Dorsolateral prefrontal cortex (tissue), 120 donors: ENCODE measurements at regions of chr4 and their contacts with region 1.

Region 1: DNA sequence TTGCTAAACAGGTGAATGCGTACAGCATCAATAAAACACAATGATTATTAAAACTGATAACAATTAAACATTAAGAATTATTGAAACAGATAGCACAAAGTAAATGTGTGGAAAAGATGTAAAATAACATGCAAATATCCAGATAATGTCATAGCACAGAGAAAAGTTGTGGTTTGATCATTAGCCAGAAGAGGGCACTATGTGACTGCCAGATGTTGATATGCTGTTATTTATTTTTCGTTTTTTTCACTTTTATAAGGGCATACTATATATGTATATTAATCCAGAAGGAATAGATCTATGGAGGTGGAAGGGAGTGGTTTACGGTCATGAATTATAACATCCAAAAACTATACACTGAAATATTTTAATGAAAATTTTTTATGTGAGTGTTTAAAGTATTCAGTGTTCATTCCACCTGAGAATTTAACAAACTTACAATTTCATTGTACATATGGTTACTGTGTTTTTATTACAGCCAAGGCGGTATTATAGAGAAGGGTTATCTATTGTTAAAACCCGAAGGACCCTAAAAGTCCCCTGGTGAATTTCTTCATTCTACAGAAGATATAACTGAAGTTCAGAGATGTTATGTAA is 211.9 kb upstream of the UGT8 start:
- DNase-seq: no peak
- H3K4me3 ChIP-seq: no peak overlapping the region
- H3K27ac ChIP-seq: no peak overlapping the region
- H3K27me3 ChIP-seq: peaks cover 0 to 4% (median 0%) of the 10 kb centered on the region in 45 donors
- CTCF ChIP-seq: peak; percentile 49 to 97 (median 80)

Region 2: GRCh38 chr4:113547487-113548042 is 839.2 kb before region 1 on chr4:
- intact Hi-C with region 1: loop called in 1 of 2 experiments (anchors 5 kb)
- DNase-seq: peak; percentile 64 to 88 (median 78)
- H3K4me3 ChIP-seq: peak overlapping the region in 3 of 59 donors; percentile 5 to 8 (median 7)
- H3K27ac ChIP-seq: peak overlapping the region in 17 of 59 donors; percentile 9 to 74 (median 28)
- H3K27me3 ChIP-seq: no peaks in the 10 kb centered on the region
- CTCF ChIP-seq: peak; percentile 86 to 99 (median 97)

Region 3: DNA sequence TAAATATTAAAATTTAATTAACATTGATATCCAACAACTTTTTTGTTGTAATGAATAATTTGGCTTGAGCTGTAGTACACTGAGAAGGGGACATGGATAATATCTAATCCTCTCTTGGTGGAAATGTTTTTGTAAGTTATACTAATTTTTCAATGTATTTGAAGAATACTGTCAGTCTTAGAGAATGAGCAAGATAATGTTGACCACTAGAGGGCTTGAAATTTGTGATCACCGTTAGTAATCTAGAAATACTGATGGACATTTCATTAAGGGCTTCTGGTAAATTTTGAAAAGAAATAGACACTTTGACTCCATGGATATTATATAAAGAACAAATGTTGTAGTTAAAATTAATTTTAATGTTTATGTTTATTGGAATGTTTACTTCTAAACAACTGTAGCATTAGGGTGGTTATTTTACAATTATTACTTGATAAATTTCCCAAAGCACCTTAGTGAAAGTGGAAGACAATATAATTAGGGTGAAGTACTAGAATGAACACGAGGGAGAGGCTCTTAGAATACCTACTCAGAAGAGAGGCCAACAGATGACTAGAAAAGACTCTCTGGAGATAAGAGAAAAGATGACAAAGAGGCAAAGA is 605.2 kb before region 1 on chr4:
- intact Hi-C with region 1: loop called in 1 of 2 experiments (anchors 5 kb)
- DNase-seq: no peak
- H3K4me3 ChIP-seq: no peak overlapping the region
- H3K27ac ChIP-seq: no peak overlapping the region
- H3K27me3 ChIP-seq: no peaks in the 10 kb centered on the region
- CTCF ChIP-seq: peak; percentile 59 to 86 (median 73)

Region 4: GRCh38 chr4:114547340-114548134 is 160.8 kb after region 1 on chr4:
- intact Hi-C with region 1: no loop called
- DNase-seq: no peak
- H3K4me3 ChIP-seq: no peak overlapping the region
- H3K27ac ChIP-seq: no peak overlapping the region
- H3K27me3 ChIP-seq: no peaks in the 10 kb centered on the region
- CTCF ChIP-seq: no peak

Region 5: DNA sequence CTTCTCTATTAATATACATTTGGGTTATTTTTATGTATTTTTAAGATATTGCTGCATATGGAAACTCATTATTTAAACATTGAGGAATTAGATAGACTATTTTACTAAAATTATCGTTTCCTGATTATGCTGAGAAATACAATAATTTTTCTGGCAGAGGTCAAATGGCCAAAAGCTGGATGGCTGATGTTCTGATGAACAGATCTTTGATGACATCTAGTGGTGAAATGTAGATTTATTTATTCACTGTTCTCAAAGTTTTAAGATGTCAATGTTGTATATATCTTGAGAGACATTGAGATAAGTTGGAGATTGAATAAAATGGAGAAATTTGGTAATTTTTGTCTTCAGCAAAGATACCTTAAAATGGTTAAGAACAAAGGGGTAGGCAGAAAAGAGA is 308.0 kb after region 1 on chr4:
- intact Hi-C with region 1: loop called (anchors 5 to 10 kb)
- DNase-seq: no peak
- H3K4me3 ChIP-seq: no peak overlapping the region
- H3K27ac ChIP-seq: peak overlapping the region in 24 of 59 donors; percentile 1 to 81 (median 46)
- H3K27me3 ChIP-seq: peaks cover 0 to 4% (median 0%) of the 10 kb centered on the region in 45 donors
- CTCF ChIP-seq: peak; percentile 62 to 92 (median 79)

Region 6: GRCh38 chr4:115851918-115852766 is 1465.4 kb after region 1 on chr4:
- intact Hi-C with region 1: loop called in 1 of 2 experiments (anchors 10 kb)
- DNase-seq: peak in 3 of 10 donors; percentile 24 to 38 (median 32)
- H3K4me3 ChIP-seq: no peak overlapping the region
- H3K27ac ChIP-seq: no peak overlapping the region
- H3K27me3 ChIP-seq: no peaks in the 10 kb centered on the region
- CTCF ChIP-seq: peak in 53 of 56 donors; percentile 17 to 70 (median 50)